Activated CD4-positive, alpha-beta T cell treated with anti-CD3 and anti-CD28 coated beads for 36 hours (primary cell): ENCODE measurements at regions of chr17 and their contacts with region 1.

Region 1: GRCh38 chr17:68196944-68197595 is 50.8 kb upstream of the AMZ2 start:
- DNase-seq: peak; percentile 58
- ATAC-seq: peak; percentile 31
- H3K4me3 Mint-ChIP-seq: peak overlapping the region; percentile 57
- H3K27ac Mint-ChIP-seq: no peak overlapping the region
- H3K4me1 Mint-ChIP-seq: peaks cover 25% of the 10 kb centered on the region
- H3K27me3 Mint-ChIP-seq: peaks cover 29% of the 10 kb centered on the region

Region 2: GRCh38 chr17:67959288-67959900 is 237.7 kb before region 1 on chr17:
- CTCF ChIA-PET with region 1: no interaction called
- POLR2A ChIA-PET with region 1: no interaction called
- intact Hi-C with region 1: no loop called
- DNase-seq: no peak
- ATAC-seq: no peak
- H3K4me3 Mint-ChIP-seq: no peak overlapping the region
- H3K27ac Mint-ChIP-seq: peak overlapping the region; percentile 66
- H3K4me1 Mint-ChIP-seq: peaks cover 16% of the 10 kb centered on the region
- H3K27me3 Mint-ChIP-seq: no peaks in the 10 kb centered on the region

Region 3: GRCh38 chr17:68172461-68172954 is 24.6 kb before region 1 on chr17:
- CTCF ChIA-PET with region 1: interaction called, 22 read pairs
- POLR2A ChIA-PET with region 1: no interaction called
- intact Hi-C with region 1: loop called (anchors 1 kb)
- DNase-seq: peak; percentile 84
- ATAC-seq: peak; percentile 69
- H3K4me3 Mint-ChIP-seq: no peak overlapping the region
- H3K27ac Mint-ChIP-seq: no peak overlapping the region
- H3K4me1 Mint-ChIP-seq: peaks cover 17% of the 10 kb centered on the region
- H3K27me3 Mint-ChIP-seq: no peaks in the 10 kb centered on the region

Region 4: DNA sequence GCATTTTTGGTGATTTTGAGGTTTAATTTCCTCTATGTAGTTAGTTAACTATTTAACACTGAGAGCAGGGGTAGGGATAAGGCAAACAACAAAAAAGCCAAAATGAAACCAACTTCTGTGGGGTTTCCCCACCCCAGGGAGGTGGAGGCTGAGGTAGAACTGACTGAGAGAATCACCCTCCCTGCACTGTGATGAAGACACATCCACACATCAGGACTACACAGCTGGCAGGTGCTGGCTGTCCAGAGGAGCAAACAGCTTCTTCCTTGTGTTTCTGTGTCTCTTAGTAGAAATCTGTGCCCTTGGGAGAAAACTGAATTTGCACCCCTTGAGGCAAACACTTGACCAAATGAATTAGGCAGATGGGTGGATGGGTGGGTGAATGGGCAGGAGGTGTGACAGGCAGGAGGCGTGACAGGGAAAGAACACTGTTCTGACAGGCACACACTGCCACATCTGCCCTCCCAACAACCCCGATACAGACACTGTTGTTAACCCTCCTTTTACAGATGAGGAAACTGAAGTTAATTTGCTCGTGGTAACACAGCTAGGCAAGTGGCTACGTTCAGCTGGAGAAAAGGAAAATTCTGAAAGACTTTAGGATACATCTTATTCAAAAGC is 12.1 kb before region 1 on chr17:
- CTCF ChIA-PET with region 1: interaction called, 67 read pairs
- POLR2A ChIA-PET with region 1: interaction called, 7 read pairs
- intact Hi-C with region 1: loop called (anchors 2 kb)
- DNase-seq: peak; percentile 75
- ATAC-seq: peak; percentile 83
- H3K4me3 Mint-ChIP-seq: peak overlapping the region; percentile 9
- H3K27ac Mint-ChIP-seq: peak overlapping the region; percentile 58
- H3K4me1 Mint-ChIP-seq: peaks cover 55% of the 10 kb centered on the region
- H3K27me3 Mint-ChIP-seq: no peaks in the 10 kb centered on the region